ENCODE measurements at regions of chr5 and their contacts with region 1.

Region 1: DNA sequence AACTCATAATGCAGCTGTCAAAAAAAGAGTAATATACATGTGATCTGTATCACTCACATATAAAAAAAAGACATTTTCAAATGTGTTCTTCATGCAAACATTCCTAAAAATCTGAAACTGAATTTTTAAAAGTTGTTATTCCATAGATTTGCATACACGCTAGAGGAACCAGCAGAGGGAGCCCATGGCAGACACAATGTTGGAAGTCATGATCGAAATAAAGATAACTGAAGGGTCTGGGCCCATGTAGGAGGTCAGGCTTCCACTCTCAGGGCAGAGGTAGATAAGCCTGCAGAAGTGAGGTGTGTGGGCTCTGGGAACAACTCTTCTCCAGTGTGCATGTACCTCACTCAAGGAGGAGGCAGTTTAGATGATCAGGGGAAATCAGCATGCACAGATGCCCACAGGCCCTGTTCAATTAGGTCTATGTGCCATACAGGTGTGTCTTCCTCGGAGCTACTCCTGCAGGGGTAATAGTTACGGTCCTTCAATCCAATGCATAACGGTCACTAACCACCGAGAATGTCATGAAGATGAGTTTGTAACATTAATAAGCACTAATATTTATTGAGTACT is 208.6 kb downstream of the EPB41L4A start:
- DNase-seq: peak; percentile 45 to 57
- H3K4me3 ChIP-seq: no peak overlapping the region
- H3K4me3 Mint-ChIP-seq: no peak overlapping the region
- H3K27ac Mint-ChIP-seq: no peak overlapping the region
- H3K4me1 ChIP-seq: no peaks in the 10 kb centered on the region
- H3K4me1 Mint-ChIP-seq: no peaks in the 10 kb centered on the region
- H3K27me3 ChIP-seq: no peaks in the 10 kb centered on the region
- H3K27me3 Mint-ChIP-seq: peaks cover 3% of the 10 kb centered on the region
- CTCF ChIP-seq: peak; percentile 58 to 75

Region 2: DNA sequence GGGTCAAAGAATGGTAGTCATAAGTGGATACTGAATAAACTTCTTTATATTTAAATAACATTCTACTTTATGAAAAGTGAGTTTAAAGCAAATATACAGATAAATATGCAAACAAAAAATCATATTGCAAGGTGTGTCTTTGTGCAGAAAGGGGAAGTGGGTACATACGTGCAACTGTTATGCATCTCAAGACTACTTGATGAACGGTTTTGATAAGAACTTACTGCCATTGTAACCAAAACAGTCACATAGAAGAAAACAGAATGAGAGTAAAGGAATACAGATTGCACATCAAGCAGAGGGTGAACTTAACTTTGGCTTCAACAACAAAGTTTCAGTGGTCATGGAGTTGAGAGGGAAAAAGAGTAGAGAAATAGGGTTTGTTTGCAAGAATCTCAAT is 976.4 kb before region 1 on chr5:
- CTCF ChIA-PET with region 1: no interaction called
- POLR2A ChIA-PET with region 1: no interaction called
- intact Hi-C with region 1: no loop called
- DNase-seq: no peak
- H3K4me3 ChIP-seq: no peak overlapping the region
- H3K4me3 Mint-ChIP-seq: no peak overlapping the region
- H3K27ac Mint-ChIP-seq: no peak overlapping the region
- H3K4me1 ChIP-seq: no peaks in the 10 kb centered on the region
- H3K4me1 Mint-ChIP-seq: no peaks in the 10 kb centered on the region
- H3K27me3 ChIP-seq: peaks cover 2% of the 10 kb centered on the region
- H3K27me3 Mint-ChIP-seq: peaks cover 32% of the 10 kb centered on the region
- CTCF ChIP-seq: no peak

Region 3: DNA sequence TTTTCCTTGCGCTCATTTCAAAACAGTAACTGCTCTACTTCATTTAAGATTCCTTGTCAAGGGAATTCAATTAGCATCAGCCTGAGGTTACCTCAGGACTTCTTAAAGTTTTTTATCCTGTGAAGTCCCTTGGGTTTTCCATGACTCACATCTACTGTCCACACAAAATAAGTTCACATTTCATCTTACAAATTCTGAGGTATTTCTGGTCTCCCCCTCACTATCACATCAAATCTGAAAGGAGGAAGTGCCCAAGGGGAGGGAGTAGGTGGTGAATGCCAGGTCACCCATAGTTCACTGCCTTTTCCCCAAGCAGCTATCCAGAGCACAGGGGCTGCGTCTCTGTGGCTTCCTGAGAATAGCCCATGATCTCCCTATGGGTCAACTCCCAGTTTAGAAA is 226.5 kb before region 1 on chr5:
- CTCF ChIA-PET with region 1: no interaction called
- POLR2A ChIA-PET with region 1: no interaction called
- intact Hi-C with region 1: no loop called
- DNase-seq: no peak
- H3K4me3 ChIP-seq: no peak overlapping the region
- H3K4me3 Mint-ChIP-seq: no peak overlapping the region
- H3K27ac Mint-ChIP-seq: no peak overlapping the region
- H3K4me1 ChIP-seq: no peaks in the 10 kb centered on the region
- H3K4me1 Mint-ChIP-seq: no peaks in the 10 kb centered on the region
- H3K27me3 ChIP-seq: no peaks in the 10 kb centered on the region
- H3K27me3 Mint-ChIP-seq: peaks cover 3% of the 10 kb centered on the region
- CTCF ChIP-seq: no peak

Region 4: GRCh38 chr5:112228667-112229066 is 18.1 kb after region 1 on chr5:
- CTCF ChIA-PET with region 1: no interaction called
- POLR2A ChIA-PET with region 1: interaction called, 3 read pairs
- intact Hi-C with region 1: loop called (anchors 1 kb)
- DNase-seq: peak; percentile 69 to 76
- H3K4me3 ChIP-seq: no peak overlapping the region
- H3K4me3 Mint-ChIP-seq: peak overlapping the region; percentile 56
- H3K27ac Mint-ChIP-seq: peak overlapping the region; percentile 76
- H3K4me1 ChIP-seq: peaks cover 23% of the 10 kb centered on the region
- H3K4me1 Mint-ChIP-seq: no peaks in the 10 kb centered on the region
- H3K27me3 ChIP-seq: no peaks in the 10 kb centered on the region; the same call in 1 of the 2 replicates
- H3K27me3 Mint-ChIP-seq: no peaks in the 10 kb centered on the region
- CTCF ChIP-seq: no peak

Region 5: GRCh38 chr5:112239996-112240395 is 29.5 kb after region 1 on chr5:
- CTCF ChIA-PET with region 1: interaction called, 3 read pairs
- POLR2A ChIA-PET with region 1: no interaction called
- intact Hi-C with region 1: loop called (anchors 1 kb)
- DNase-seq: peak; percentile 41 to 47
- H3K4me3 ChIP-seq: no peak overlapping the region
- H3K4me3 Mint-ChIP-seq: no peak overlapping the region
- H3K27ac Mint-ChIP-seq: no peak overlapping the region
- H3K4me1 ChIP-seq: no peaks in the 10 kb centered on the region
- H3K4me1 Mint-ChIP-seq: peaks cover 6% of the 10 kb centered on the region
- H3K27me3 ChIP-seq: no peaks in the 10 kb centered on the region
- H3K27me3 Mint-ChIP-seq: peaks cover 3% of the 10 kb centered on the region
- CTCF ChIP-seq: peak in 1 of 2 experiments; percentile 39

Region 6: DNA sequence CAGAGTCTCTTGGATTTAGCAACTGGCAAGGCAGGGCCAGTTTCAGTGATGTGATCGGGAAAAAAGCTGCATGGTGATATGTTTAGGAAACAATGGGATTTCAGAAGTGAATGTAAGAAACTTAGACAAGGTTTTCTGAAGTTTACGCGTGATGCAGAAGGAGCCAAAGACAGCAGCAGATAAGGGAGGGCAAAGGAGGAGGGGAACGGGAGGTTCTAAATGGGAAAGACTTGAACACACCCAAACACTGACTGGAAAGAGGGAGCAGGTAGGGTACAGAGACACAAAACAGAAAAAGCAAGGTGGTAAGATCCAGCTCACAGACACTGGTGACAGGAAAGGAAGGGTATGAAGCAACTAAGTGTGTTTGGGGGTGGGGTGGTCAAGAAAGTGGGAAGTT is 93.2 kb after region 1 on chr5:
- CTCF ChIA-PET with region 1: no interaction called
- POLR2A ChIA-PET with region 1: no interaction called
- intact Hi-C with region 1: loop called (anchors 1 kb)
- DNase-seq: no peak
- H3K4me3 ChIP-seq: no peak overlapping the region
- H3K4me3 Mint-ChIP-seq: no peak overlapping the region
- H3K27ac Mint-ChIP-seq: no peak overlapping the region
- H3K4me1 ChIP-seq: no peaks in the 10 kb centered on the region
- H3K4me1 Mint-ChIP-seq: no peaks in the 10 kb centered on the region
- H3K27me3 ChIP-seq: no peaks in the 10 kb centered on the region
- H3K27me3 Mint-ChIP-seq: peaks cover 30% of the 10 kb centered on the region
- CTCF ChIP-seq: no peak

Region 7: GRCh38 chr5:112419986-112420864 is 209.7 kb after region 1 on chr5:
- CTCF ChIA-PET with region 1: interaction called, 15 read pairs
- POLR2A ChIA-PET with region 1: no interaction called
- intact Hi-C with region 1: loop called (anchors 1 kb)
- DNase-seq: peak; percentile 72 to 84
- H3K4me3 ChIP-seq: peak overlapping the region; percentile 58
- H3K4me3 Mint-ChIP-seq: peak overlapping the region; percentile 76
- H3K27ac Mint-ChIP-seq: no peak overlapping the region
- H3K4me1 ChIP-seq: peaks cover 10% of the 10 kb centered on the region
- H3K4me1 Mint-ChIP-seq: peaks cover 8% of the 10 kb centered on the region
- H3K27me3 ChIP-seq: peaks cover 8% of the 10 kb centered on the region
- H3K27me3 Mint-ChIP-seq: peaks cover 25% of the 10 kb centered on the region
- CTCF ChIP-seq: peak; percentile 91 to 92

Region 8: GRCh38 chr5:112492291-112492690 is 281.8 kb after region 1 on chr5:
- CTCF ChIA-PET with region 1: no interaction called
- POLR2A ChIA-PET with region 1: no interaction called
- intact Hi-C with region 1: loop called (anchors 10 kb)
- DNase-seq: peak; percentile 48 to 52
- H3K4me3 ChIP-seq: no peak overlapping the region
- H3K4me3 Mint-ChIP-seq: no peak overlapping the region
- H3K27ac Mint-ChIP-seq: no peak overlapping the region
- H3K4me1 ChIP-seq: no peaks in the 10 kb centered on the region
- H3K4me1 Mint-ChIP-seq: no peaks in the 10 kb centered on the region
- H3K27me3 ChIP-seq: no peaks in the 10 kb centered on the region
- H3K27me3 Mint-ChIP-seq: peaks cover 9% of the 10 kb centered on the region
- CTCF ChIP-seq: peak; percentile 39 to 70

Measured in Caco-2 (cell line).